Heart right ventricle (tissue), 16 donors: ENCODE measurements at regions of chr15 and their contacts with region 1.

Region 1: DNA sequence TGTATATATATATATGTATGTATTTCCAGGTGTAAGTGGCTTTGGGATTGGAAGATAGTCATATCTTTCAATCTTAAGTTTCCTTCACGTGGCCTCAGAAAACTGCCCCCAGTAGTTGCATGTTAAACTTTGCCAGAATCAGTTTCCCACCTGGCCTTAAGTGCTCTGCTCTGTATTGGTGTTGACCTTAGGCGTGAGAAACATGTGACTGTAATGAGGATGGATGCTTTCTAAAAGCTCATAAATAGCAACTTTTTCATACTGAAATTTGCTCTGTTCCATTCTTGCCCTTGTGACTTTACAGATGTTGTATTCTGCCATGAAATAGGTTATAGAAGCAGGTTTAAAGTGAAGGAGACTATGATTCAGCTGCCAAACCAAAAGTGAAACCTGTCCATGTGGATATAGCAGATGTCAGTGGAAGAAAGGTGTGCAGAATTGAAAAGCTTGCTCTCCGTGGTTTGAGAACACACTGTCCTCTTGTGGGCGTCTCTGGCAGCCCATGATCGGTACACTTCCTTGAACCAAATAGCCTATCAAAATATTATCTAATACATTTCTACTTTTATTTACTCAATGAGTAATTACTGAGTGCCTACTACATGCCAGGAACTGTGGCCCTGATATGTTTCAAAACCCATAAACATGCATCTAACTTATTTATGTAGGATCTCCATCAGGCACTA is 15.8 kb downstream of the SCG5 start:
- DNase-seq: no peak
- ATAC-seq: no peak
- H3K4me3 ChIP-seq: no peak overlapping the region
- H3K27ac ChIP-seq: no peak overlapping the region
- H3K4me1 ChIP-seq: peaks cover 0 to 4% (median 0%) of the 10 kb centered on the region in 9 donors
- H3K27me3 ChIP-seq: no peaks in the 10 kb centered on the region
- CTCF ChIP-seq: no peak

Region 2: GRCh38 chr15:32706704-32707103 is 49.4 kb after region 1 on chr15:
- intact Hi-C with region 1: no loop called
- DNase-seq: no peak
- ATAC-seq: no peak
- H3K4me3 ChIP-seq: no peak overlapping the region
- H3K27ac ChIP-seq: no peak overlapping the region
- H3K4me1 ChIP-seq: no peaks in the 10 kb centered on the region
- H3K27me3 ChIP-seq: peaks cover 0 to 72% (median 25%) of the 10 kb centered on the region in 7 donors
- CTCF ChIP-seq: no peak

Region 3: GRCh38 chr15:32723171-32723948 is 66.0 kb after region 1 on chr15:
- intact Hi-C with region 1: loop called in 1 of 10 experiments (anchors 10 kb)
- DNase-seq: no peak
- ATAC-seq: no peak
- H3K4me3 ChIP-seq: no peak overlapping the region
- H3K27ac ChIP-seq: no peak overlapping the region
- H3K4me1 ChIP-seq: peaks cover 0 to 12% (median 6%) of the 10 kb centered on the region in 9 donors
- H3K27me3 ChIP-seq: peaks cover 9 to 55% (median 36%) of the 10 kb centered on the region in 7 donors
- CTCF ChIP-seq: no peak

Region 4: GRCh38 chr15:32736005-32736700 is 78.8 kb after region 1 on chr15:
- intact Hi-C with region 1: no loop called
- DNase-seq: no peak
- ATAC-seq: no peak
- H3K4me3 ChIP-seq: no peak overlapping the region
- H3K27ac ChIP-seq: no peak overlapping the region
- H3K4me1 ChIP-seq: no peaks in the 10 kb centered on the region
- H3K27me3 ChIP-seq: peaks cover 0 to 28% (median 10%) of the 10 kb centered on the region in 7 donors
- CTCF ChIP-seq: no peak

Region 5: GRCh38 chr15:32956006-32956405 is 298.7 kb after region 1 on chr15:
- intact Hi-C with region 1: loop called in 1 of 10 experiments (anchors 10 kb)
- DNase-seq: no peak
- ATAC-seq: peak in 2 of 8 donors; percentile 29 to 34
- H3K4me3 ChIP-seq: no peak overlapping the region
- H3K27ac ChIP-seq: no peak overlapping the region
- H3K4me1 ChIP-seq: peaks cover 0 to 8% (median 0%) of the 10 kb centered on the region in 9 donors
- H3K27me3 ChIP-seq: no peaks in the 10 kb centered on the region
- CTCF ChIP-seq: peak in 7 of 9 donors; percentile 26 to 46 (median 34)

Region 6: DNA sequence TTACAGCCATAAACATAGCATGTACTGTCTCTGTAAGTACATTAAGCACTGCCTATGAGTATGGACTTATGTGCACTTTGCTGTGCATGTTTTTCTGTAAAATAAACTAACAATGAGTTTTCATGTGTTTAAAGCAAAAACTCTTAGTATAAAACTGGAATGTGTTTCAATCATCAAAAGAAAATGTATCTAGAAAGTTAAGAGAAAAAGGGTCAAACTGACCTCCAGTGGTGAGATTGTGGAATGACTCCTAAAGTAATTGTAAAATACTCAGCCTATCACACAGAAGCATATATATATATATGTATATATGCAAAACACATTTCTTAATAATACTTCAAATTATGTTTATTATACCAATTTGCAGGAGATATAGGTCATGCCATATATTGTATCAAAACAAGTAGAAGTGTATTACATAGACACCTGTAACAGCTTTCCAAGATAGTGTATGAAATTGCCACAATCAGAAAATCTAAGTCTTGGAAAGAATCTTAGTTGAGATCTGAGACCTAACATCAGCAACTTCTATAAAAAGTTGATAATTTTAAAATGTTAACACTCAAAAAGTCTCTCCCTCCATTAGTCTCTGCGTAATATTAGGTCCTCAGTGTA is 337.6 kb after region 1 on chr15:
- intact Hi-C with region 1: loop called (anchors 2 to 10 kb)
- DNase-seq: no peak
- ATAC-seq: peak in 1 of 8 donors; percentile 25
- H3K4me3 ChIP-seq: no peak overlapping the region
- H3K27ac ChIP-seq: no peak overlapping the region
- H3K4me1 ChIP-seq: no peaks in the 10 kb centered on the region
- H3K27me3 ChIP-seq: no peaks in the 10 kb centered on the region
- CTCF ChIP-seq: peak; percentile 27 to 66 (median 54)

Region 7: GRCh38 chr15:33126559-33127290 is 469.4 kb after region 1 on chr15:
- intact Hi-C with region 1: loop called in 2 of 10 experiments (anchors 10 kb)
- DNase-seq: peak; percentile 29 to 67
- ATAC-seq: peak in 6 of 8 donors; percentile 53 to 82 (median 64)
- H3K4me3 ChIP-seq: no peak overlapping the region
- H3K27ac ChIP-seq: peak overlapping the region in 1 of 10 donors; percentile 52
- H3K4me1 ChIP-seq: peaks cover 0 to 22% (median 3%) of the 10 kb centered on the region in 9 donors
- H3K27me3 ChIP-seq: no peaks in the 10 kb centered on the region
- CTCF ChIP-seq: no peak

Region 8: GRCh38 chr15:33132722-33133345 is 475.5 kb after region 1 on chr15:
- intact Hi-C with region 1: loop called in 2 of 10 experiments (anchors 10 kb)
- DNase-seq: no peak
- ATAC-seq: peak; percentile 53 to 83 (median 64)
- H3K4me3 ChIP-seq: no peak overlapping the region
- H3K27ac ChIP-seq: no peak overlapping the region
- H3K4me1 ChIP-seq: peaks cover 0 to 46% (median 17%) of the 10 kb centered on the region in 9 donors
- H3K27me3 ChIP-seq: no peaks in the 10 kb centered on the region
- CTCF ChIP-seq: peak; percentile 27 to 72 (median 63)

Region 9: DNA sequence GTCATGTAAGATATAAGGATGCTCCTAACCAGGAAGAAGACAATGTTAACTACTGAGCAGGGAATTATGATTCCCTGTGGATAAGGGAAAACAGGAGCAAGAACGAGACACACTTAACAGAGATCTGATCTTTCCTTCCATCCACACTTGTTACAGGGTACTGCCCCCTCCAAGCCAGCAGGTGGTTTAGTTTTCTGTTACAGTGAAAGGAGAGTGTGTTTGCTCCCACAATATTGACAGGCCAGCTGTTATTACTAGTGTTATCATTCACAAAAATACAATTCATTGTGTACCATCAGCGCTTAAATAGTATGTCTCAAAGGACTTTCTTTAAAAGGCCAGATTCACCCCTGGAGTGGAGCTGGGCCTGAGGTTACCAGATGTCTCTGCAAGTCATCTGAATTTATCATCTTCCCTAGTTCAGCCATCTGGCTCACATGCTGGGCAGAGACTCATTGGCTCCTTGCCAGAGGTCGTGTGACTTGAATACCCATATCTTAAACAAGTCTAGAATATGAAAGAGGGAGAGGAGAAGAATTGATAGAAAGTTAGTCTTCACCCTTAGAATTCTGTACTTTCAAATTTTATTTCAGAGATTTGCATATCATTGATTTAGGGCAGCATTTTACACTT is 554.0 kb after region 1 on chr15:
- intact Hi-C with region 1: no loop called
- DNase-seq: peak in 1 of 2 donors; percentile 21
- ATAC-seq: no peak
- H3K4me3 ChIP-seq: no peak overlapping the region
- H3K27ac ChIP-seq: no peak overlapping the region
- H3K4me1 ChIP-seq: no peaks in the 10 kb centered on the region
- H3K27me3 ChIP-seq: no peaks in the 10 kb centered on the region
- CTCF ChIP-seq: no peak

Region 10: DNA sequence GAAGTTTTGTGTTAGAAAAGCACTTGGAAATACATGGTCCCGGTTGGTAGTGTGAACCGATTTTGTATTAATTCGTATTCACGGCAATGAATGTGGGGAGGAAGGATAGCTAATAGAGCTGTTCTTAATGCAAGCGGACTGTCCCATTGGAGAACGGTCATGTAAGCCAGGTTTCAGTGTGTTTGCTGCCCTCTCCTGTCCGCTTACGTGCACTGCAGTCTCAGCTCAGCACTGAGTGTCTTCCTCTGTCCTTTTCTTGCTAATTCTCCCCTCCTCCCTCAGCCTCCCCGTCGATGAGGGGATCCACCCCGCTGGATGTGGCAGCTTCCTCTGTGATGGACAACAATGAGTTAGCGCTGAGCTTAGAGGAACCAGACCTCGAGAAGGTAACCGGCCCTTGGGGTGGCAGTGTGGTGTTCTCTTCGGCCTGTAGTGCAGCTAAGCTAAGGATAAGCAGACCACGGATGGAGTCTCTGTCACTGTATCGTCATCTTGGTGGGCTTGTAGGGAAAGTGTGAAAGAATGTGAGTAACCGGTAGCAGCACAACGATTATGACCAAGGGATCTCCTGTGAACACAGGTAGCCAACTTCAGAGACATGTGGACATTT is 1043.5 kb after region 1 on chr15:
- intact Hi-C with region 1: loop called in 3 of 10 experiments (anchors 5 to 10 kb)
- DNase-seq: peak; percentile 52 to 55
- ATAC-seq: peak; percentile 80 to 94 (median 90)
- H3K4me3 ChIP-seq: no peak overlapping the region
- H3K27ac ChIP-seq: no peak overlapping the region
- H3K4me1 ChIP-seq: peaks cover 0 to 5% (median 0%) of the 10 kb centered on the region in 9 donors
- H3K27me3 ChIP-seq: peaks cover 0 to 30% (median 10%) of the 10 kb centered on the region in 7 donors
- CTCF ChIP-seq: peak; percentile 57 to 93 (median 89)